ENCODE measurements at regions of chr4 and their contacts with region 1.

Region 1: GRCh38 chr4:1266881-1267763 is 18.2 kb upstream of the CTBP1 start:
- DNase-seq: no peak
- H3K4me3 Mint-ChIP-seq: peak overlapping the region; percentile 65
- H3K27ac Mint-ChIP-seq: peak overlapping the region; percentile 80
- H3K4me1 Mint-ChIP-seq: peaks cover 21% of the 10 kb centered on the region
- H3K27me3 Mint-ChIP-seq: no peaks in the 10 kb centered on the region

Region 2: GRCh38 chr4:592825-593520 is 674.1 kb before region 1 on chr4:
- CTCF ChIA-PET with region 1: no interaction called
- POLR2A ChIA-PET with region 1: no interaction called
- DNase-seq: no peak
- H3K4me3 Mint-ChIP-seq: no peak overlapping the region
- H3K27ac Mint-ChIP-seq: no peak overlapping the region
- H3K4me1 Mint-ChIP-seq: no peaks in the 10 kb centered on the region
- H3K27me3 Mint-ChIP-seq: peaks cover 12% of the 10 kb centered on the region

Region 3: DNA sequence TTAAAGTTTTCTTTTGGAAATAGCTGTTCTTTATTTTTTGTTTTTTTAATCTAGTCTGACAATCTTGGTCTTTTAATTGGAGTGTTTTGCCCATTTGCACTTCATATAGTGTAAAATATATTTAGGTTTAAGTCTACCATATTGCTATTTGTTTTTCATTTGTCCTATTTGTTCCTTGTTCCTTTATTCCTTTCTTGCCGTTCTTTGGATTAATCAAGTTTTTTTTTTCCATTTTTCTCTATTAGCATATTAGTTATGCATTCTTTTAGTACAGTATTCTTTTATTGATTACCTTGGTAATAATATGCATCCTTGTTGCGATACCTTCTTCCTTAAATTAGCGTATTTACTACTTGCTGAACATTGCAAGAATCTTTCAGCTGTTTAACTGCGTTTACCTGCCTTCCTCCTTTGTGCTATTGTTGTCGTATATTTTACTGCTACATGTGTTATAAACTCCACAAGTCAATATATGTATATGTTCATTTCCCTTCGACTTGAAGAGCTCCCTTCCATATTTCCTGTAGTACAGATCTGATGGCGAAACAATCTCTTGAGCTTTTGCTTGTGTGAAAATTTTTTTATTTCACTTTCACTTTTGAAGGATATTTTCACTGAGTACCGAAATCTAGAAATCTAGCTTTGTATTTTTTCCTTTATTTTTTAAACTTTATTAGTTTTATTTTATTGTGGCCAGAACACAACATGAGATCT is 129.9 kb before region 1 on chr4:
- CTCF ChIA-PET with region 1: interaction called, 54 read pairs
- POLR2A ChIA-PET with region 1: interaction called, 3 read pairs
- DNase-seq: no peak
- H3K4me3 Mint-ChIP-seq: peak overlapping the region; percentile 62
- H3K27ac Mint-ChIP-seq: no peak overlapping the region
- H3K4me1 Mint-ChIP-seq: peaks cover 16% of the 10 kb centered on the region
- H3K27me3 Mint-ChIP-seq: peaks cover 25% of the 10 kb centered on the region

Region 4: GRCh38 chr4:1167247-1167949 is 99.7 kb before region 1 on chr4:
- CTCF ChIA-PET with region 1: interaction called, 31 read pairs
- POLR2A ChIA-PET with region 1: interaction called, 5 read pairs
- DNase-seq: peak; percentile 91
- H3K4me3 Mint-ChIP-seq: peak overlapping the region; percentile 78
- H3K27ac Mint-ChIP-seq: peak overlapping the region; percentile 63
- H3K4me1 Mint-ChIP-seq: peaks cover 33% of the 10 kb centered on the region
- H3K27me3 Mint-ChIP-seq: peaks cover 24% of the 10 kb centered on the region

Region 5: DNA sequence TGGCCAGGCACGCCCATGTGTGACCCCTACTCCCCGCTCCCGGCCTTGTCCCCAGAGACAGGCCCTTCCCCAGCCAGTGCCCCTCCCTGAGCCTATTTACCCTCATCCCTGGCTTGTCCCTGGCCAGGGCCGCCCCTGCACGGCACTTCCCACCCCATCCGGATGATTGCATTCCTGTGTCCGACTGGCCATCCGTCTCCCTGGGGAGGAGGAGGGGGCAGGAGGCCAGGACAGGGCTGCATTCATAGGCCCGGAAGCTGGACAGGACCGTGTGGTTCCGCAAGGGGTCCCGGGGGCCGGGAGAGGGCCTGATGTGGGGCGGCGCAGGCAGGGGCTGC is 41.0 kb before region 1 on chr4:
- CTCF ChIA-PET with region 1: no interaction called
- POLR2A ChIA-PET with region 1: no interaction called
- DNase-seq: no peak
- H3K4me3 Mint-ChIP-seq: no peak overlapping the region
- H3K27ac Mint-ChIP-seq: no peak overlapping the region
- H3K4me1 Mint-ChIP-seq: no peaks in the 10 kb centered on the region
- H3K27me3 Mint-ChIP-seq: no peaks in the 10 kb centered on the region

Region 6: GRCh38 chr4:1249148-1249730 is 17.9 kb before region 1 on chr4:
- CTCF ChIA-PET with region 1: interaction called, 63 read pairs
- POLR2A ChIA-PET with region 1: interaction called, 115 read pairs
- DNase-seq: peak; percentile 85
- H3K4me3 Mint-ChIP-seq: peak overlapping the region; percentile 85
- H3K27ac Mint-ChIP-seq: peak overlapping the region; percentile 95
- H3K4me1 Mint-ChIP-seq: peaks cover 73% of the 10 kb centered on the region
- H3K27me3 Mint-ChIP-seq: no peaks in the 10 kb centered on the region

Region 7: DNA sequence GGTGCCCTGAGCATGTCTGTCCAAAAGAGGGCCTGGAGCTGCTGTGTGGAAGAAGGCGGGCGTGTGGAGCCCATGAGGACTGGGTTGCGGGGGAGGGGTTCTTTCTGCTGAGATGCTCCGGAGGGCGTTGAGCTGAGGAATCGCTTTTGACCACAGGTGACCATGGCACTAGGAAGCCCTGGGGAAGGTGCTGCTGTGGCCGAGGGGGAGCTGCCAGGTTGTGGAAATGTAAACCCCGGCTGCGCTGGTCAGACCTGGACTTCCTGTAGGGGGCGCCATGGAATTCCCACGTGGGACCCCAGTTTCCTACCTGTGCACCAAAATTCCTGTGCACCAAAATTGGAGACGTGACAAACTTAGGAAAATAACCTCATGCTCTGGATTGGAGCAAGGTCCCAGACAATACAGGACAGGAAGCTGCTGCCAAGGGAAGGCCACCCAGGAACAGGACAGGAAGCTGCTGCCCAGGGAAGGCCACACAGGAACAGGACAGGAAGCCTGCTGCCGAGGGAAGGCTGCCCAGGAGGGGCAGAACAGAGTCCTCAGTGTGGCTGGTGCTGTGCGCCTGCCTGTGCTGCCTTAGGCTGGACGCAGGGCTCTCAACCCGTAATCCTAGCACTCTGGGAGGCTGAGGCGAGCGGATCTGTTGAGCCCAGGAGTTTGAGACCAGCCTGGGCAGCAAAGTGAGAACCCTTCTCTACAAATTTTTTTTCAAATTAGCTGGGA is 51.5 kb after region 1 on chr4:
- CTCF ChIA-PET with region 1: no interaction called
- POLR2A ChIA-PET with region 1: no interaction called
- DNase-seq: no peak
- H3K4me3 Mint-ChIP-seq: no peak overlapping the region
- H3K27ac Mint-ChIP-seq: no peak overlapping the region
- H3K4me1 Mint-ChIP-seq: peaks cover 18% of the 10 kb centered on the region
- H3K27me3 Mint-ChIP-seq: no peaks in the 10 kb centered on the region

Region 8: GRCh38 chr4:1644891-1645657 is 378.0 kb after region 1 on chr4:
- CTCF ChIA-PET with region 1: no interaction called
- POLR2A ChIA-PET with region 1: no interaction called
- DNase-seq: no peak
- H3K4me3 Mint-ChIP-seq: no peak overlapping the region
- H3K27ac Mint-ChIP-seq: no peak overlapping the region
- H3K4me1 Mint-ChIP-seq: peaks cover 3% of the 10 kb centered on the region
- H3K27me3 Mint-ChIP-seq: no peaks in the 10 kb centered on the region